ENCODE measurements at regions of chrX and their contacts with region 1.

Region 1: DNA sequence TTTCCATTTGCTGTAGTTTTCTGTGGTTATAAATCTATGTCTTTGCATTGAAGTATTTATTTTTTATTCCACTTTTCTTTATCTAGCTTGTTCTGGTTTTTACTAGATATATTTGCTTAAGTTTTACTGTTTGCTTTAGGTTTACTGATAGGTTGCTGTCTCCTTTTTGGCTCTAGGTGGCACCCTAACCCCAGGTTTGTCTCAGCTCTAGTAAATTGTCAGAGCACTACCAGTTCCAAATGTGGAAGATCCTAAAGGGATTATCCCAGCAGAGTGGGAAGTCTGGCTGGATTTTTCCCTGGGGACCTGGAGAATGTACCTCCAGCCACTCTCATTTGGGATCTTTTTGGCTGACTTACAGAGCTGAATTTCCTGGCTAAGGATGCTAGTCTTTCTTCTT is 106.1 kb downstream of the PBDC1 start:
- DNase-seq: peak; percentile 32 to 42 (median 41)
- H3K4me3 ChIP-seq: no peak overlapping the region
- H3K4me3 Mint-ChIP-seq: no peak overlapping the region
- H3K27ac ChIP-seq: no peak overlapping the region
- H3K27ac Mint-ChIP-seq: no peak overlapping the region
- H3K4me1 ChIP-seq: no peaks in the 10 kb centered on the region
- H3K4me1 Mint-ChIP-seq: no peaks in the 10 kb centered on the region
- H3K27me3 ChIP-seq: no peaks in the 10 kb centered on the region
- H3K27me3 Mint-ChIP-seq: no peaks in the 10 kb centered on the region

Region 2: DNA sequence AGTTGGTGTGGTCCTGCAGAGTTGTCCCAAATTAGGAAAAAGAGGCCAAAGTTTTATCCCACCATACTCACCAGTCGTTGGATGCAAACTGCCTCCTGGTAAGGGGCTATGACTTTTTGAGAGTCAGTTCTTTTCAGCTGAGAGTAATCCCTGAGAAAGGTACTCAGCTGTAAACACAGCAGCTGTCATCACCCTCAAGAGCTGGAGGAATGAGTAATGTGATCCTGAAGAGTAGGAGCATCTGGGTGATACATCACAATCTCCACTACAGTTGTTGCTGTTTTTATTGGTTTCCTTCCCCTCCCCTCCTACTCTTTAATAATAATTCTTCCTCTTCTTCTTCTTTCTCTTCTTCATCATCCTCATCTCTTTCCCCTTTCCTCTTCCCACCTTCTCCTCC is 154.2 kb after region 1 on chrX:
- CTCF ChIA-PET with region 1: no interaction called
- POLR2A ChIA-PET with region 1: no interaction called
- intact Hi-C with region 1: no loop called
- DNase-seq: no peak
- H3K4me3 ChIP-seq: no peak overlapping the region
- H3K4me3 Mint-ChIP-seq: no peak overlapping the region
- H3K27ac ChIP-seq: no peak overlapping the region
- H3K27ac Mint-ChIP-seq: no peak overlapping the region
- H3K4me1 ChIP-seq: peaks cover 25% of the 10 kb centered on the region
- H3K4me1 Mint-ChIP-seq: peaks cover 22 to 54% (median 41%) of the 10 kb centered on the region in 4 donors
- H3K27me3 ChIP-seq: no peaks in the 10 kb centered on the region
- H3K27me3 Mint-ChIP-seq: no peaks in the 10 kb centered on the region

Region 3: DNA sequence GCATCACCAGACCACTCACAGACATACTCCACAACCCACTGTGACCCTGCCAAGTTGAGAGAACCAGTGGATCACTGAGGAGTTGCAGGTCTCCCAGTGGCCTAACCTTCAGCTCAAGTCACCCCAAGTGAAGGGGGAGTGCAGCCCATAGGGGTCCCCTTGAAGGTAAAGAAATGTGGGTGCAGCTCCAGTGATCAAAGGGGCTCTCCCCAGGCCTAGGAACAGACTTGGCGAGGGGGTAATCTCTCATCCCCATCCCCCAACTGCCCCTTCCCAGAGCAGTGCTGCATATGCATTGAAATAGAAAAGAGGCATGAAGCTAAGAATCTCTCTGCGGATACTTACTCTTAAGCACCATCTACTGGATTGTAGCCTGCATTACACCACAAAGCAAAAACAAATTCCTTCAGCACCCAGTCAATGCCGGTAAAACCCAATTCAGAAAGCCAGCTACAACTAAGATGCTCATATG is 175.5 kb after region 1 on chrX:
- CTCF ChIA-PET with region 1: interaction called, 54 read pairs
- POLR2A ChIA-PET with region 1: no interaction called
- intact Hi-C with region 1: loop called (anchors 1 kb)
- DNase-seq: peak; percentile 16 to 42 (median 32)
- H3K4me3 ChIP-seq: no peak overlapping the region
- H3K4me3 Mint-ChIP-seq: no peak overlapping the region
- H3K27ac ChIP-seq: no peak overlapping the region
- H3K27ac Mint-ChIP-seq: no peak overlapping the region
- H3K4me1 ChIP-seq: no peaks in the 10 kb centered on the region
- H3K4me1 Mint-ChIP-seq: peaks cover 4 to 11% (median 5%) of the 10 kb centered on the region in 4 donors
- H3K27me3 ChIP-seq: no peaks in the 10 kb centered on the region
- H3K27me3 Mint-ChIP-seq: no peaks in the 10 kb centered on the region

Region 4: GRCh38 chrX:77628294-77629025 is 1349.5 kb after region 1 on chrX:
- CTCF ChIA-PET with region 1: interaction called, 3 read pairs
- POLR2A ChIA-PET with region 1: no interaction called
- intact Hi-C with region 1: loop called (anchors 5 kb)
- DNase-seq: peak in 2 of 5 donors; percentile 2 to 5
- H3K4me3 ChIP-seq: no peak overlapping the region
- H3K4me3 Mint-ChIP-seq: no peak overlapping the region
- H3K27ac ChIP-seq: no peak overlapping the region
- H3K27ac Mint-ChIP-seq: no peak overlapping the region
- H3K4me1 ChIP-seq: no peaks in the 10 kb centered on the region
- H3K4me1 Mint-ChIP-seq: peaks cover 3 to 18% (median 6%) of the 10 kb centered on the region in 4 donors
- H3K27me3 ChIP-seq: no peaks in the 10 kb centered on the region
- H3K27me3 Mint-ChIP-seq: no peaks in the 10 kb centered on the region

Region 5: DNA sequence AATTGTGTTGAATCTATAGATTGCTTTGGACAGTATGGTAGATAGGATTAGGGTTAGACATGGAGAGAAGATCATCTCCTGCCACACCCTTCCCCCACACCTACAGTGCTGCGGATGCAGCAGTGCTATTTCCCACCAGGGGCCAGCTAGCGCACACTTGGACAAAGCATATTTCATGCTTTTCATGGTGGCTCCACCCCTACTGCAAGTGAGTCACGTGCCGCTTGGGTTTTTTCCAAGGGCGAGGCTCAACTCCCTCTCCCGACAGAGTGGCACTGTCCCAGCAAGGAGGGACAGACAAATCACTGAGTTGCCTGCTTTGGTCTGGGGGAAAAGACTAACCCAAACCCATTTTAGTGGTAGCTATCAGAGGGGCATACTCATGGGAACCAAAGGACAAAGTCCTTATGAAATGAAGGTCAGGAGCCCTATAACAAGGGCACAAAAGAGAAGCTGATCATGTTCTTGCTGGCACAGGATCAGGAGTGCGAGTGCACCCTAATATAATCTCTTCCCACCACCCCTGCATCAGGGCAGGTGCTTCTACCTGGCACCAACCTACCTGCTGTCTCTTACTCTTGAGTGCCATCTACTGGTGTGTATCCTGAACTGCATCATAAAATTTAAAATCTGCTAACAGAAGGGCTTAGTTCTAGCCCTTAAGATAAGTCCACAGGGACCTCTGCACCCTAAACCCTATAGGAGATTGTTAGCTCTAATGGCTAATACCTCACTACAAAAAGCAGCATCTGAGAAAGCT is 1745.5 kb after region 1 on chrX:
- CTCF ChIA-PET with region 1: interaction called, 3 read pairs
- POLR2A ChIA-PET with region 1: no interaction called
- intact Hi-C with region 1: loop called (anchors 5 kb)
- DNase-seq: peak; percentile 33 to 56 (median 53)
- H3K4me3 ChIP-seq: no peak overlapping the region
- H3K4me3 Mint-ChIP-seq: no peak overlapping the region
- H3K27ac ChIP-seq: no peak overlapping the region
- H3K27ac Mint-ChIP-seq: peak overlapping the region in 3 of 7 donors; percentile 17 to 38 (median 28)
- H3K4me1 ChIP-seq: no peaks in the 10 kb centered on the region
- H3K4me1 Mint-ChIP-seq: peaks cover 0 to 7% (median 3%) of the 10 kb centered on the region in 4 donors
- H3K27me3 ChIP-seq: no peaks in the 10 kb centered on the region
- H3K27me3 Mint-ChIP-seq: no peaks in the 10 kb centered on the region